Right lobe of liver (tissue), 6 donors: ENCODE measurements at regions of chr3 and their contacts with region 1.

Region 1: DNA sequence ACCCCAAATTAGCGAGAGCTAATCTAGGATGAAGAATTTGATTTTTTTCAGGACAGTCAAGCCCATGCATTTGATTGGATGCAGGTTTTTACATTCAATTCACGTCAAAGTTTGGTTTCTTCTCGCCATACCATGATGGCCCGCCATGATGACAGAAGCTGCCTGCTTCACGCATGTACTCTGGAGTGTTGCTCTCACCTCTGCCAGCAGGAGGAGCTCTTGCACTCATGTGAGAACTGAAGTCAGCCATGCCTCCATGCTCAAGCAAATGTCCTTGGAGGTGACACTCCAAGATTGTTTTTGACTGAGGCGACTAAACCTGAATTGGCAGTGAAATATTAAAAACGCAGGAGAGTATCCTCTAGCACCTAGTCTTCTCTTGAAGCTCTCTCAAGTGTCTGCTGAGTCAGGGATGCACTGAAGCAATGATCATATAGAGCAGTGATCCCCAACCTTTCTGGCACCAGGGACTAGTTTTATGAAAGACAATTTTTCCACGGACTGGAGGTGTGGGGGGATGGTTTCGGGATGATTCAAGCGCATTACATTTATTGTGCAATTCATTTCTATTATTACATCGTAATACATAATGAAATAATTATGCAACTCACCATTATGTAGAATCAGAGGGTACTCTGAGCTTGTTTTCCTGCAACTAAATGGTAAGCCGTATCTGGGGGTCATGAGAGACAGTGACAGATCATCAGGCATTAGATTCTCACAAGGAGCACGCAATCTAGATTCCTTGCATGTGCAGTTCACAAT is 121.0 kb downstream of the SAMMSON start:
- DNase-seq: peak; percentile 72 to 78 (median 78)
- ATAC-seq: peak; percentile 92 to 94 (median 92)
- H3K4me3 ChIP-seq: no peak overlapping the region
- H3K27ac ChIP-seq: no peak overlapping the region
- H3K4me1 ChIP-seq: no peaks in the 10 kb centered on the region
- H3K27me3 ChIP-seq: no peaks in the 10 kb centered on the region
- CTCF ChIP-seq: peak; percentile 79 to 84 (median 82)
- POLR2A ChIP-seq: no peak

Region 2: DNA sequence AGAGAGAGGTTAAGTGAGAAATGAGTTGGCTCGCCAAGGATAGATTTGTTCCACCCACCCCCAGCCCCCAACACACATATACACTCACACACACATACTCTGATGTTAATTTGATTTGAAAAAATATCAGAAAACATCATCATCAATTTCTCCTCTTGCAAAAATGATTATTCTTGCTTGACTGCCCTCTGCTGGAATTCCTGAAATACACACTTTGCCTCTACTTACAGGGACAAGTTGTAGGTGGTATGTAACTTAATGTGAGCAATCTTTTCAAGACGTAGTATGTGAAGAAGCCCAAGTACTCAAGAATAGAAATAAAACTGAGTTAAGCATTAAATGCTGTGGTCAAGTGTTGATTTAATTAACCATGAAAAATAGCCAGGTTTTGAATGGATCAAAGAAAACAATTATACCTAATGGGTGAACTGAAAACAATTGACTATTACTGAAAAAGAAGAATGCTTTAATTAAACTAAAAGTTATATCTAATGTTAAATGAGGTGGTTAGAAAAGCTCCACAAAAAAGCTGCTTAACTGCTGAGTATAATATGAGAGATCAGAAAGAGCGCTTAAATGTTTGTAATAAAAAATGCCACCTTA is 238.5 kb after region 1 on chr3:
- intact Hi-C with region 1: loop called in 1 of 2 experiments (anchors 10 kb)
- DNase-seq: no peak
- ATAC-seq: peak; percentile 46 to 62 (median 60)
- H3K4me3 ChIP-seq: no peak overlapping the region
- H3K27ac ChIP-seq: no peak overlapping the region
- H3K4me1 ChIP-seq: no peaks in the 10 kb centered on the region
- H3K27me3 ChIP-seq: no peaks in the 10 kb centered on the region
- CTCF ChIP-seq: peak; percentile 62 to 78 (median 67)
- POLR2A ChIP-seq: no peak

Region 3: GRCh38 chr3:70631716-70632307 is 511.3 kb after region 1 on chr3:
- intact Hi-C with region 1: no loop called
- DNase-seq: no peak
- ATAC-seq: no peak
- H3K4me3 ChIP-seq: no peak overlapping the region
- H3K27ac ChIP-seq: no peak overlapping the region
- H3K4me1 ChIP-seq: no peaks in the 10 kb centered on the region
- H3K27me3 ChIP-seq: no peaks in the 10 kb centered on the region
- CTCF ChIP-seq: no peak
- POLR2A ChIP-seq: no peak